ENCODE measurements at regions of chr6 and their contacts with region 1.

Region 1: DNA sequence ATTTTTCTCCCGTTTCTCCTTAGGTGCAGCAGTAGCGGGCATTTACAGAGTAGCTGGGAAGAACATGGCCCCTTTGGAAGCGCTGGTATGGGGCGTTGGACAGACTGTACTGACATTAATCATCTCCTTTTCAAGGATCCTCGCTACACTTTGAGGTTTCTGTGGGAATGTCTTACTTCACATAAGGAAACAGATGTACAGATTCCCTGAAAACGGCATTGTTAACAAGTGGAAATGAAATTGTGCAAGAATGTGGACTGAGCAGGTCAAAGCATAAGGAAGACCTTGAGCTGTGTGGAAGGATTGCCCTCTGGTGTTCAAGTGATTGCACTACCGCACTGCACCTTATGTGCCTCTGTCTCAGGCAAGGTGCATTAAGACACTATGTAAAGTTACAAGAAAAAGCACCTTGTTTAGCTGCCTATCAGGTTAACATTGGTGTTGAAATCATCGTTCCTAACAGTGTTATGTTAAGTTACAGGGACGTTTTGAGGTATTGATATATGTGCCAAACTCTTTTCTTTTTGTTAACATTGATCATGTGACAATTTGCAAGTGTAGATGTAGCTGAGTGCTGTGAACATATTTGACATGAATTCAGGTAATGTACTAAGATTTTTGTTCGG is 38.0 kb downstream of the TMEM170B start:
- DNase-seq: peak in 1 of 2 donors; percentile 51
- ATAC-seq: peak; percentile 96 to 99
- H3K4me3 ChIP-seq: no peak overlapping the region
- H3K27ac ChIP-seq: no peak overlapping the region
- H3K4me1 ChIP-seq: no peaks in the 10 kb centered on the region
- H3K27me3 ChIP-seq: no peaks in the 10 kb centered on the region
- CTCF ChIP-seq: peak; percentile 65 to 91 (median 77)
- POLR2A ChIP-seq: no peak

Region 2: GRCh38 chr6:11144393-11144851 is 431.1 kb before region 1 on chr6:
- in situ Hi-C with region 1: loop called in 2 of 4 experiments (anchors 5 to 10 kb)
- intact Hi-C with region 1: loop called (anchors 10 kb)
- DNase-seq: peak; percentile 53 to 55
- ATAC-seq: peak; percentile 92
- H3K4me3 ChIP-seq: no peak overlapping the region
- H3K27ac ChIP-seq: no peak overlapping the region
- H3K4me1 ChIP-seq: no peaks in the 10 kb centered on the region
- H3K27me3 ChIP-seq: no peaks in the 10 kb centered on the region
- CTCF ChIP-seq: peak; percentile 66 to 88 (median 77)
- POLR2A ChIP-seq: no peak

Region 3: GRCh38 chr6:11155589-11155988 is 419.9 kb before region 1 on chr6:
- in situ Hi-C with region 1: loop called in 1 of 4 experiments (anchors 10 kb)
- intact Hi-C with region 1: no loop called
- DNase-seq: no peak
- ATAC-seq: no peak
- H3K4me3 ChIP-seq: no peak overlapping the region
- H3K27ac ChIP-seq: no peak overlapping the region
- H3K4me1 ChIP-seq: no peaks in the 10 kb centered on the region
- H3K27me3 ChIP-seq: no peaks in the 10 kb centered on the region
- CTCF ChIP-seq: no peak
- POLR2A ChIP-seq: no peak

Region 4: DNA sequence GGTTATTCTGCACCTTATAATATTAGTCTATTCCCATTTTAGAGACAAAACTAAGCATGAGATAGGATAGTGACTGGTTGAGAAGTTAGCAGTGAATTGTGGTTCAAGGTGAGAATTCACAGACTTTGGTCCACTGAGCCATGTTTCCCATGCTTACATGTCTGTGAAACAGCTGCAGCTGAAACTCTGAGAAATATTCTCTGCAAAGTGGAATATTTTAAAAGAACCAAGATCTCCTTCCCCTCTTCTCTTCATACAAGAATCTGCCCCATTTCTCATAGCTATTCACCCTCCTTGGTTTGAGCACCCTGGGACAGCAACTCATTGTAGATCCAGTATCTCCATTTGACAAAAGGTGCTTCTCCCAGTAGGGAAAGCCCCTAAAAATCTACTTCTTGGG is 108.2 kb before region 1 on chr6:
- in situ Hi-C with region 1: no loop called
- intact Hi-C with region 1: no loop called
- DNase-seq: no peak
- ATAC-seq: no peak
- H3K4me3 ChIP-seq: no peak overlapping the region
- H3K27ac ChIP-seq: no peak overlapping the region
- H3K4me1 ChIP-seq: no peaks in the 10 kb centered on the region
- H3K27me3 ChIP-seq: no peaks in the 10 kb centered on the region
- CTCF ChIP-seq: no peak
- POLR2A ChIP-seq: no peak

Region 5: GRCh38 chr6:11537229-11538051 is 38.1 kb before region 1 on chr6 and contains the start of gene TMEM170B:
- in situ Hi-C with region 1: no loop called
- intact Hi-C with region 1: loop called (anchors 5 kb)
- DNase-seq: peak; percentile 84 to 87
- ATAC-seq: peak; percentile 85 to 90
- H3K4me3 ChIP-seq: peak within 1 kb of the TSS; percentile 69 to 89 (median 86)
- H3K27ac ChIP-seq: peak within 1 kb of the TSS; percentile 78 to 91 (median 86)
- H3K4me1 ChIP-seq: peaks cover 4 to 21% of the 10 kb centered on the region in 2 donors
- H3K27me3 ChIP-seq: no peaks in the 10 kb centered on the region
- CTCF ChIP-seq: no peak
- POLR2A ChIP-seq: peak; percentile 77 to 90
- total RNA-seq, gene TMEM170B: 5.5 to 22.0 (median 12.3) TPM

Region 6: GRCh38 chr6:11921017-11921438 is 345.5 kb after region 1 on chr6:
- in situ Hi-C with region 1: no loop called
- intact Hi-C with region 1: no loop called
- DNase-seq: peak in 1 of 2 donors; percentile 29
- ATAC-seq: peak in 1 of 2 donors; percentile 45
- H3K4me3 ChIP-seq: no peak overlapping the region
- H3K27ac ChIP-seq: no peak overlapping the region
- H3K4me1 ChIP-seq: peaks cover 0 to 3% of the 10 kb centered on the region in 2 donors
- H3K27me3 ChIP-seq: no peaks in the 10 kb centered on the region
- CTCF ChIP-seq: no peak
- POLR2A ChIP-seq: no peak

Measured in gastrocnemius medialis (tissue), 4 donors.